GM18951 (cell line): ENCODE measurements at regions of chr19 and their contacts with region 1.

Region 1: GRCh38 chr19:56080669-56081401 is 40.3 kb downstream of the ZNF787 start:
- POLR2A ChIP-seq: no peak

Region 2: DNA sequence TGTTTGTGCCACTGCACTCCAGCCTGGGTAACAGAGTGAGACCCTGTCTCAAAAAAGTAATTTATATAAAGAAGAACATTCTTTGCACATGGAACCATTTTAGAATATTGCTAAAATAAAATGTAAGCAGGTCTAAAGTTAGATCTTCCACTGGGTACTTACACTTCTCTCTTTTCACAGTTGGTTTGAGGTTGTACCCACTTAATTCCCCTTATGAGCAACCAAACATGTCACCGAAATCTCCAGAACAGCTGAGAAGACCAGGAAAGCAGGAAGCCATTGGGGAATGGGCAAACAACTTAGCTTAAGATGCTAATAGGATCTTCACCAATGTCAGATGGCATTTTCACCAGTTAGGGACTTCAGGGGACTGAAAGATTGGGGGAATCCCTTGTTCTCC is 225.7 kb before region 1 on chr19:
- in situ Hi-C with region 1: no loop called
- POLR2A ChIP-seq: no peak

Region 3: DNA sequence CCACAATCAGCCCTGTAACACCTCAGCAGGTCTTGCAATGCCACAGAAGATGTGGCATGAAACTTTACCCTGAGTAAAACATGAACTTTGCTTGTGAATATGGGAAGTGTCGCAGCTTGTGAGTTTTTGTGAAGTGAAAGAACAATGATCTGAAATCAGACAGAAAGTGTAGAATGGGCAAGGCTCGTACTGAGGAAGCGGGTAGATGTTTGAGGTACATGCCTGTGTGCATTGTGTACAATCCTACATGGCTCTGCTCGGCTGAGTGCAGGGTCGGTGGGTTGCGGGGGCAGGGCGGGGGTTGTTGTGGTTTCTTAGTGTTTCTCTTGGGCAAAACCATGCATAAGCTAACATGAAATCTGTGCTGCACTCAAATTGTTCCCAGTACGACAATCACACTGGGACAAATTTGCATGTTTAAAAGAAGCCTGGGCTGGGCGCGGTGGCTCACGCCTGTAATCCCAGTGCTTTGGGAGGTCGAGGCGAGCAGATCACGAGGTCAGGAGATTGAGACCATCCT is 149.8 kb before region 1 on chr19:
- in situ Hi-C with region 1: no loop called
- POLR2A ChIP-seq: no peak

Region 4: GRCh38 chr19:56026769-56027168 is 54.1 kb before region 1 on chr19:
- in situ Hi-C with region 1: no loop called
- POLR2A ChIP-seq: no peak

Region 5: DNA sequence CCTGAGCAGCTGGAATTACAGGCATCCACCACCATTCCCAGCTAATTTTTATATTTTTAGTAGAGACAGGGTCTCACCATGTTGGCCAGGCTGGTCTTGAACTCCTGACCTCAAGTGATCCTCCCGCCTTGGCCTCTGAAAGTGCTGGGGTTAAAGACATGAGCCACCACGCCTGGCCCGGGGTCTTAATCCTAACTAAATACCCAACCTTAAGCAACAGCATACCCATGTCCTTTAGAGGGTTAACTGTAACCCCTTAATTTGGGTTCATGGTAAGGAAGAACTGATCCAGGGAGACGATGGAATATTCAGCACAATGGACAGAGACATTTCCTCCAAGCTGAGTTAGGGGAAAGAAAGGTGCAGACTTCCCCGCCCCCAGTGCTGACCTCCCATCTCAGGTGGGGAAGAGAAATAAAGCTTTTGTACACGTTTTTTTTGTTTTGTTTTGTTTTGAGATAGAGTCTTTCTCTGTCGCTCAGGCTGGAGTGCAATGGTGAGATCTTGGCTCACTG is 86.3 kb after region 1 on chr19:
- in situ Hi-C with region 1: loop called (anchors 5 kb)
- POLR2A ChIP-seq: no peak

Region 6: DNA sequence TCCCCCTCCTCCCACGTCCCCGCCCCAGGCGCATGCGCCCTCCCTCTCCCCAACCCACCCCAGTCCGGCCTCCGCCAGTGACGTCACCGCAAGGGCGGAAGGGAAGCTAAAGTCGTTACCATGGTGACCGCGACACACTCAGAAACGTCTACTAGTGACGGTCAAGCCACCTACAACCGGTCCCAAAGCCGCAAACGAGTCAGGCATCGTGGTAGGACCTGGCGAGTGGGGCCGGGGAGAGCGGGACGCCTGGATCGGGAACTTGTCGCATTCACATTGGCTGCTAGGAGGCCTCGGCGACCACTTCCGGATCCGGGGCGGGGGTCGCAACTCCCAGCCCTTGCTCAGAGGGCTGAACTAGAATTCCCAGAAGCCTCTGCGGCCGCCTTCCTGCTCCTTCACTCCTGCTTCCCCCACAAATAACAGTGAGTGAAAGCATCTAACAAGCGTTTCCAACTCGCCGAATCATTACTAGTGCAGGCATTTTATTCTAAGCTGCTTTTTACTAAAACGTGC is 233.8 kb after region 1 on chr19 and contains the start of gene ZSCAN5A:
- in situ Hi-C with region 1: loop called (anchors 25 kb)
- POLR2A ChIP-seq: peak; percentile 65